Testis (tissue), 5 donors: ENCODE measurements at regions of chr1 and their contacts with region 1.

Region 1: DNA sequence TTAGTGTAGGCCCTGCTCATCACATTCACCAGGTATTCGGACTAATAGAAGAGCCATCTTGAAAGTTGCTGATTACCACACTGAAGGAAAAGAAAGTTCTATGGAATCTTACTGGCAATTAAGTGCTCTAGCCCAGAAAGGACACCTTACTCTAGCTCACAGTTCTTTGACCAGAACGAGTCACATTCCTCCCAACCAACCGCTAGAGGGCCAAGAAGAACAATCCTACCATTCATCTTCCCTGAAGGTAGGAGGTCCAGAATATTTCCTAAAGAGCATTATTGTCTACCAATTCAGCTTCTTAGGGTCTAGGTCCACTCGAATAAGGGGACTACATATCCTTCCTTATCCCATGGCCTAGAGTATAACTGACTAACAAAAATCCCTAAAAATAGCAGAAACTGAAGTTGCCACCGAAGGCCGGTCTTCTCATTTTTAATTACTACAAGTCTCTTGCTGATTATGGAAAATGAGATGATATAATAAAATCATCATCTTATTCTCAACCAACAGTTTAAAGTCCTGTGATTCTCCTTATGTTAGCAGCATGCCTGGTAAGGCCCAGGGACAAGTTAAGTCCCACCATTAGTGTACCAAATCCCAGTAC is 2.7 kb upstream of the FMO1 start:
- DNase-seq: peak; percentile 50
- H3K4me3 ChIP-seq: no peak overlapping the region
- H3K27ac ChIP-seq: no peak overlapping the region
- H3K4me1 ChIP-seq: no peaks in the 10 kb centered on the region
- H3K27me3 ChIP-seq: no peaks in the 10 kb centered on the region
- CTCF ChIP-seq: peak; percentile 38 to 71 (median 66)
- POLR2A ChIP-seq: no peak

Region 2: DNA sequence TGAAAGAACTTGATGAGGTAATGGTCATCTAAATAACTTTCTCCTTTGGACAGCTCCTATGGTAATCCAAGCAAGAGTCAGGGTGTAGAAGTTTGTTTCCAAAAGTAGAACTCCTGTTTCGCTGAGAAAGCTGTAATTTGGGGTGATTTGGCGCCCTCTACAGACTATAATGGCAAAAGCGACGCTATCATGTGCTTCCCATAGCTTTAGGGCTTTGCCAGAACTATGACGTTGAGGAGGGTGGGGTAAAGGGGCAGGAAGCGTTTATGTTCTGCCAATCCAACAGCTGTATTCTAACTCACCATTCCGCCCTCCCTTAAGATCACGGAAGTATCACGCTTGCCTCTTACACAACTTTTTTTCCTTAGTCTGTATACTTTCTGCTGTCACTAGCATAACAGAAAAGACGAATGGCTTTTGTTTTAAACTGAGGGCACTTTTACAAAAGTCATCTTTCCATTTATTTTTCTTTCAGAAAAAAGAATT is 68.3 kb after region 1 on chr1 and contains the start of gene FMO4:
- intact Hi-C with region 1: loop called (anchors 10 kb)
- DNase-seq: peak; percentile 94
- H3K4me3 ChIP-seq: peak within 1 kb of the TSS; percentile 13 to 21
- H3K27ac ChIP-seq: peak within 1 kb of the TSS; percentile 0 to 85
- H3K4me1 ChIP-seq: no peaks in the 10 kb centered on the region
- H3K27me3 ChIP-seq: no peaks in the 10 kb centered on the region
- CTCF ChIP-seq: peak; percentile 77 to 94 (median 89)
- POLR2A ChIP-seq: no peak
- total RNA-seq, gene FMO4: 3.1 to 4.2 TPM

Region 3: GRCh38 chr1:171636141-171636540 is 390.6 kb after region 1 on chr1:
- intact Hi-C with region 1: no loop called
- DNase-seq: no peak
- H3K4me3 ChIP-seq: no peak overlapping the region
- H3K27ac ChIP-seq: no peak overlapping the region
- H3K4me1 ChIP-seq: peaks cover 8% of the 10 kb centered on the region
- H3K27me3 ChIP-seq: no peaks in the 10 kb centered on the region
- CTCF ChIP-seq: no peak
- POLR2A ChIP-seq: no peak

Region 4: GRCh38 chr1:171781176-171781875 is 535.8 kb after region 1 on chr1 and contains the start of gene METTL13:
- intact Hi-C with region 1: no loop called
- DNase-seq: peak; percentile 99
- H3K4me3 ChIP-seq: peak within 1 kb of the TSS; percentile 65 to 92
- H3K27ac ChIP-seq: peak within 1 kb of the TSS; percentile 31 to 84
- H3K4me1 ChIP-seq: peaks cover 26% of the 10 kb centered on the region
- H3K27me3 ChIP-seq: no peaks in the 10 kb centered on the region
- CTCF ChIP-seq: no peak
- POLR2A ChIP-seq: peak; percentile 54
- total RNA-seq, gene METTL13: 47.5 to 50.3 TPM